ENCODE measurements at regions of chr16 and their contacts with region 1.

Region 1: GRCh38 chr16:352547-353403 is at the start of gene AXIN1:
- DNase-seq: peak; percentile 100
- H3K4me3 ChIP-seq: peak within 1 kb of the TSS; percentile 37 to 87 (median 66)
- H3K27ac ChIP-seq: peak within 1 kb of the TSS; percentile 42 to 88 (median 74)
- H3K4me1 ChIP-seq: peaks cover 15 to 76% (median 46%) of the 10 kb centered on the region in 6 donors
- H3K27me3 ChIP-seq: no peaks in the 10 kb centered on the region
- CTCF ChIP-seq: peak in 7 of 11 experiments; percentile 44 to 84 (median 72)
- POLR2A ChIP-seq: no peak
- total RNA-seq, gene AXIN1: 22.6 to 27.3 (median 24.8) TPM

Region 2: DNA sequence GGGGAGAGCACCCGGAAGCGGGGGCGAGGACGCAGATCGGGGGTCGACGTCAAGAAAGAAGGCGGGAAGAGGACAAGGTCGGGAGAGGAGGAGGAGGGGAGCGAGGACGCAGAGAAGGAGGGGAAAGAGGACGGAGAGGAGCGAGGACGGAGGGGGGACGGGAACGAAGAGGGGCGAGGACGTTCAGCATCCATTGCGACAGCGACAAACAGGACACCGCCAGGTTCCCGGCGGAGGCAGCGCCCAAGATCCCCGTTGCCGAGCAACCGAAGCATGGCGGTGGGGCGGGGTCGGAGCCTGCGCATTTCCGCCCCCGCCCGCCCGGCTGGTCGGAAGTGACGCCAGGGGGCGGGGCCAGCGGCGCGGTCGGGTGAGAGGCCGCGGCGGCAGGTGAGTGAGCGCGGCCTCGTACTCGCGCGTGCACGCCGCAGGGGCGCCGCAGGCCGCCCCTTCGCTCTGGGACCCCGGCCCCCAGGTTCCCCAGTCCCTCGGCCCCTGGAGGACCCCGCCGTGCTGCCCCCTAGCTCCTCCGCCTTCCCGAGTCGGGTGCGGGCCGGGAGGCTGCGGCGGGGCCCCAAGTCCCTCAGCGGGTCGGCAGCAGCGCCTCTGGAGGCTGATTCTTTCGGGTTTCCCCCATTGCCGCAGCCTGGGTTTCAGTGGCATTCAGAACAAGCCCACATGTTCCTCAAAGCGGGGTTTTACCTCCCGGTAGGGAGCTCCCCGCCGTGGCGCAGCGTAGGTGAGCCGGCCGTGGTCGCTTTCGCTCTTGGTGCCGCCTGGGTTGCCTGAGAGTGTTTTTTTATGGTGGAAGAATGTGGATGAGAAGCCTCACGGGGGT is 118.1 kb before region 1 on chr16 and contains the start of gene FAM234A:
- intact Hi-C with region 1: loop called (anchors 10 kb)
- DNase-seq: peak; percentile 98
- H3K4me3 ChIP-seq: peak within 1 kb of the TSS; percentile 64 to 86 (median 73)
- H3K27ac ChIP-seq: peak within 1 kb of the TSS; percentile 94 to 99 (median 97)
- H3K4me1 ChIP-seq: peaks cover 0 to 34% (median 17%) of the 10 kb centered on the region in 6 donors
- H3K27me3 ChIP-seq: no peaks in the 10 kb centered on the region
- CTCF ChIP-seq: peak in 10 of 11 experiments; percentile 24 to 77 (median 50)
- POLR2A ChIP-seq: peak; percentile 20 to 87 (median 84)
- total RNA-seq, gene FAM234A: 32.2 to 63.1 (median 42.5) TPM